Posterior vena cava (tissue), 2 donors: ENCODE measurements at regions of chr19 and their contacts with region 1.

Region 1: GRCh38 chr19:56507446-56508289 is at the start of gene ZNF471:
- DNase-seq: peak; percentile 100
- total RNA-seq, gene ZNF471: 7.7 to 9.4 TPM

Region 2: GRCh38 chr19:56543776-56544175 is 36.1 kb after region 1 on chr19:
- intact Hi-C with region 1: loop called in 1 of 2 experiments (anchors 2 kb)
- DNase-seq: no peak